ENCODE measurements at regions of chr14 and their contacts with region 1.

Region 1: DNA sequence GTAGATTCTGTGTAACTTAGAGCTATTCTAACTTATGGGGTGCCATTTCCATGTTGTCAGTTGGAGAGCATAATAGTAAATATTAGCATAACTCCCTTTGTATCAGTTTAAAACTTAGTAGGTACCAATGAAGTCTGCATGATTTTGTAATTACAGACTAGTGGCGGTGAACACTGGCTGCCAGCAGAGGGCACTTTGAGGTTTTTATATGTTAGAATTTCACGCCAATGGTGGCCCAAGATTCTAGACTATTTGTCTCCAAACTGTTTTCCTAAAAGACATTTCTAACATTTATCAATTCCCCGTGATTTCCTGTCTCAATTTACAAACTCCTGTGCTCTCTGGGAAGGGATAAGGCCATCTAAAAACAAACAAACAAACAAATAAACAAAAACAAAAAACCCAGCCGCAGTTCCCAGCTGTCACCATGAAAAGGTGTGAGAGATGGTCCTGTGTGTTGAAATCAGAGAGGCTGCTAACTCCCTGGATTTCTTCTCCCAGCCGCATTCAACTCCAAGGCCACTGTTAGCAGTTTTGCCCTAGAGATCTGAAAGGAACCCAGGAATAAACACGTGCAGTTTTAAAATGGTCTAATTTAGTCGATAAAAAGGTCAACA is 57.6 kb downstream of the BRMS1L start:
- DNase-seq: peak in 1 of 3 donors; percentile 55
- ATAC-seq: no peak
- H3K4me3 ChIP-seq: no peak overlapping the region
- H3K27ac ChIP-seq: no peak overlapping the region
- H3K4me1 ChIP-seq: no peaks in the 10 kb centered on the region
- H3K27me3 ChIP-seq: no peaks in the 10 kb centered on the region

Region 2: GRCh38 chr14:35747379-35747778 is 136.4 kb before region 1 on chr14:
- intact Hi-C with region 1: no loop called
- DNase-seq: no peak
- ATAC-seq: no peak
- H3K4me3 ChIP-seq: no peak overlapping the region
- H3K27ac ChIP-seq: no peak overlapping the region
- H3K4me1 ChIP-seq: no peaks in the 10 kb centered on the region
- H3K27me3 ChIP-seq: no peaks in the 10 kb centered on the region

Region 3: GRCh38 chr14:36076197-36076596 is 192.4 kb after region 1 on chr14:
- intact Hi-C with region 1: no loop called
- DNase-seq: no peak
- ATAC-seq: no peak
- H3K4me3 ChIP-seq: no peak overlapping the region
- H3K27ac ChIP-seq: no peak overlapping the region
- H3K4me1 ChIP-seq: no peaks in the 10 kb centered on the region
- H3K27me3 ChIP-seq: no peaks in the 10 kb centered on the region

Region 4: DNA sequence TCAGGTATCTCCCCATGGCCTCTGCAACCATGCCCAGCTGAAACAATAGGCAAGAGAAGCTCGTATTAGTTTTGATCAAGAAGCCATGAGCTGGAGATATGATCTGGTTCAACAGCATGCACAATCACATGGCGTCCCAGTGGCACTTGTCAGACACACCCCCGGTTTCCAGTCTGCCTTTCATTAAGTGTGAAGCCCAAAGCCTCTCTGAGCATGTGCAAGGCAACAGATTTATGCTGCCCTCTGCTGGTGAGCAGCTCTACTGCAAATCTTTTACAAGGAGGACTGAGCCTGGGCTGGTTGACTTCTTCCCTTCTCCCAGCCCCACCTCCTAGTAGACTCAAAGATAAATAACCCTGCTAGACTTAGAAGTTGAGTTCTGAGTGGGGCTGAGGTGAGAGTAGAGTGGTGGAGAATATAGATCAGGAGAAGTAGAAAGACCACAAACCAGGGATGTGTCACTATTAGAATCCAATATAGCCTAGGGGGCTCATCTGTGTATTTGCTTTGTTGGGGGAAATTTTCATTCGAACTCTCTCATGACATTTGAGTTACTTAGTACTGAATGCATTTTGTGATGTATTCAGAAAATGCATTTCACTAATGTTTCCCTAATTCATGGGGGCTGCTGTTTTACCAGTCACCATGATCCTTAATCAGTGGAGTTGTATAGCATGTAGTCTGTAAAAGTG is 490.3 kb after region 1 on chr14:
- intact Hi-C with region 1: loop called in 1 of 4 experiments (anchors 10 kb)
- DNase-seq: peak; percentile 68 to 80 (median 72)
- ATAC-seq: peak; percentile 80 to 86
- H3K4me3 ChIP-seq: no peak overlapping the region
- H3K27ac ChIP-seq: no peak overlapping the region
- H3K4me1 ChIP-seq: no peaks in the 10 kb centered on the region
- H3K27me3 ChIP-seq: no peaks in the 10 kb centered on the region

Measured in right cardiac atrium (tissue), 5 donors.